Common myeloid progenitor, CD34-positive (primary cell): ENCODE measurements at regions of chr3 and their contacts with region 1.

Region 1: DNA sequence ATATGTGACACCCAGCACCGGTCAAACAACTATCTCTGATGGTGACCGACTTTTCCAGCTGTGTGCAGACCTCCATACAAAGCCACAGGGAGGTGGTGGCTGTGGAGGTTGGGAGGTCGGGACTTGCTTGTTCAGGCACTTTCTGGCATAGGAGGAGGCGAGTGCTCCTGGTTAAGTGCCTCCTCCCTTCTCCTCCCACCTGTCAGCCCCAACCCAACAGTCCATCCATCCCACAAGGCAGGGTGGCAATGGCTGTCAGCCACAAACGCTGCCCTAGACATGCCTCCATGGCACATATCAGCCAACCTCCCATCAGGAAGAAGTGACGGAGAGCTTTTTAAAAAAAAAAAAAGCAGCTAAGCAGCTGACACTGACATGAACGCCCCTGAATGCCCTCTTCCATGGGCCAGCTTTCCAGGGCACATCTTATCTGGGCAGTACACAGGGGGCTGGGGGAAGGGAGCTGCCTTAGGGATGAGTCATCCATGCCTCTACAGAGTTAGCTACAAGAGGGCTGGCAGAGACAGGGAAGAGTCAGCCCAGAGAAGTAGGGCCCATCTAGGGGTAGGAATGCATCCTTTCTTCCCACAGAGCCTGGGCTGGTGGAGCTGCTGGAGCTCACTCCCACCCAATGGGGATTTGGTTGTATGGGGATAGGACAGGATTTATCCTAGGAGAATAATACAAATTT is 41.2 kb downstream of the CCDC12 start:
- DNase-seq: peak in 1 of 3 donors; percentile 34
- H3K4me3 ChIP-seq: no peak overlapping the region
- H3K27ac ChIP-seq: peak overlapping the region in 1 of 2 experiments; percentile 15
- H3K4me1 ChIP-seq: peaks cover 27 to 80% (median 53%) of the 10 kb centered on the region in 4 experiments
- H3K27me3 ChIP-seq: no peaks in the 10 kb centered on the region

Region 2: GRCh38 chr3:46947981-46948791 is 12.9 kb after region 1 on chr3:
- CTCF ChIA-PET with region 1: interaction called, 17 read pairs
- POLR2A ChIA-PET with region 1: interaction called, 3 read pairs
- DNase-seq: peak in 2 of 3 donors; percentile 63 to 72
- H3K4me3 ChIP-seq: peak overlapping the region in 2 of 7 experiments; percentile 26 to 31
- H3K27ac ChIP-seq: peak overlapping the region in 1 of 2 experiments; percentile 68
- H3K4me1 ChIP-seq: peaks cover 21 to 61% (median 55%) of the 10 kb centered on the region in 4 experiments
- H3K27me3 ChIP-seq: no peaks in the 10 kb centered on the region

Region 3: DNA sequence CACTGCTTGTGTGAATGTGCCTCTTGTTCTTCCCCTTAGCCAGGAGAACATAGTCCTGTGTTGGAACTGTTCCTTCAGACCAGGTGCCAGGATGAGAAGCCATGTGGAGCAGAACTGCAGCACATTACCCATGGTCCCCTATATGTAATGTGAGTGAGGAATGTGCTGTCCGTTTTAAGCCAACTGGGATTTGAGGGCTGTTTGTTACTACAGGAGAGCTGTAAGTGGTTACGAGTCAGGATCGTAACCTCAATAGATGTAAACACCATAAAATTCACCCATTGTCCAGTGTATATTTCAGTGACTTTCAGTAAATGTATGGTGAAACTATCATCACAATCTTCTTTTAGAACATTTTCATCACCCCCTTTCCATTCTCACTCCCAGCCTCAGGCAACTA is 550.5 kb after region 1 on chr3:
- CTCF ChIA-PET with region 1: no interaction called
- POLR2A ChIA-PET with region 1: no interaction called
- DNase-seq: no peak
- H3K4me3 ChIP-seq: no peak overlapping the region
- H3K27ac ChIP-seq: no peak overlapping the region
- H3K4me1 ChIP-seq: no peaks in the 10 kb centered on the region
- H3K27me3 ChIP-seq: no peaks in the 10 kb centered on the region